Activated CD4-positive, alpha-beta memory T cell treated with anti-CD3 and anti-CD28 coated beads for 36 hours (primary cell): ENCODE measurements at regions of chr12 and their contacts with region 1.

Region 1: GRCh38 chr12:59626377-59626776 is 30.5 kb downstream of the SLC16A7 start:
- DNase-seq: peak; percentile 21
- H3K4me3 Mint-ChIP-seq: no peak overlapping the region
- H3K27ac Mint-ChIP-seq: no peak overlapping the region
- H3K4me1 Mint-ChIP-seq: peaks cover 55% of the 10 kb centered on the region
- H3K27me3 Mint-ChIP-seq: no peaks in the 10 kb centered on the region

Region 2: DNA sequence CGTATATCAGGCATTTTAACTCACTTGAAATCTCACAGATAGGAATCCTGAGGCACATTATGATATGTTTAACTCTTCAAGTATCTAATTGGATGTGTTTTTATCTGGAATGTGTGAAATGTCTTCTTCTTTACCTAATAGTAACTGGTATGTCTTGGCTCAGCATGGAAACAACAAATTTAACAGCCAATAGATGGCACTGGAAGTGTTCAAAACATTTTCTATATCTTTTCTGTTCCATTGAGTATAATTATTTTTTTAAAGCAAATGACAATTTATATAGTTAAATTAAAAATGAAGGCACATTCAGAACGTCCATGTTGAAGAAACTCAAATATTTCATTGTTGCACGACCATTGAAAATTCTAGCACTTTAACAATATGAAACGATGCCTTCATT is 195.1 kb before region 1 on chr12:
- CTCF ChIA-PET with region 1: no interaction called
- POLR2A ChIA-PET with region 1: no interaction called
- intact Hi-C with region 1: no loop called
- DNase-seq: no peak
- H3K4me3 Mint-ChIP-seq: no peak overlapping the region
- H3K27ac Mint-ChIP-seq: no peak overlapping the region
- H3K4me1 Mint-ChIP-seq: no peaks in the 10 kb centered on the region
- H3K27me3 Mint-ChIP-seq: no peaks in the 10 kb centered on the region

Region 3: DNA sequence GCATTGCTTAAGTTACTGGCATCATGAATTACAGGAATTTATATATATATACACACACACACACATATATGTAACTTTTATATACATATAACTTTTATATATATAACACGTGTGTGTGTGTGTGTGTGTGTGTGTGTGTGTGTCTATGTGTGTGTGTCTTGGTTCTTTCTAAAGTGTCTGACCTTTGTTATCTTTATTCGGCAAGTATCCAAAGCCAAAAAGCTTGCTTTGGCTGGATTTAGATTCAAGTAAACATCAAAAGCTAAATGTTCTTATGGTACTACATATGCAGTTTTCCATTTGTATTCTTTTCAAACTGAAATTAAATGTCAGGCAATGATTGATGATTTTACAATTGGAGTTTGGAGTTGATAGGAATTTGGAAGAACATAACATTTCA is 39.3 kb after region 1 on chr12:
- CTCF ChIA-PET with region 1: no interaction called
- POLR2A ChIA-PET with region 1: no interaction called
- intact Hi-C with region 1: loop called (anchors 5 kb)
- DNase-seq: no peak
- H3K4me3 Mint-ChIP-seq: no peak overlapping the region
- H3K27ac Mint-ChIP-seq: no peak overlapping the region
- H3K4me1 Mint-ChIP-seq: peaks cover 30% of the 10 kb centered on the region
- H3K27me3 Mint-ChIP-seq: no peaks in the 10 kb centered on the region

Region 4: DNA sequence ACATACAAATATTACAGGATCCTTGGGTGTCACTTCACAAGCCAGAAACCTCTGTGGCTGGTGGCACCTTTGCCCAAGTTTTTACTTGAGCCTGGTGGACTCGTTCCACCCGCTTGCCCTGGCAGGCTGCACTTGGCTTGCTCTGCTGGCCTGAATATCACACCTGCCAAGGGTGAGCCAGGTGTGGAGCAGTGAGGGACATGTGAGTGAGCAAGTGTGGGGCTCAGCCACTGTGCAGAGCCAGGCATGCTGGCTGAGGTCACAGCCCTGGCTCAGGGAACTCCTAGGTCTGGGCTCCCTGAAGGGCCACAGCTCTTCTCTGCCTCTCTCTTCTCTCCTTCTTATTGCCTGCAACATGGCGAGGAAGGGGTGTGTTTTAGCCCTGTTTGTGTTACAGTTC is 51.5 kb after region 1 on chr12:
- CTCF ChIA-PET with region 1: no interaction called
- POLR2A ChIA-PET with region 1: no interaction called
- intact Hi-C with region 1: loop called (anchors 2 kb)
- DNase-seq: no peak
- H3K4me3 Mint-ChIP-seq: no peak overlapping the region
- H3K27ac Mint-ChIP-seq: no peak overlapping the region
- H3K4me1 Mint-ChIP-seq: peaks cover 18% of the 10 kb centered on the region
- H3K27me3 Mint-ChIP-seq: no peaks in the 10 kb centered on the region

Region 5: GRCh38 chr12:60072911-60073310 is 446.5 kb after region 1 on chr12:
- CTCF ChIA-PET with region 1: no interaction called
- POLR2A ChIA-PET with region 1: no interaction called
- intact Hi-C with region 1: no loop called
- DNase-seq: no peak
- H3K4me3 Mint-ChIP-seq: no peak overlapping the region
- H3K27ac Mint-ChIP-seq: no peak overlapping the region
- H3K4me1 Mint-ChIP-seq: no peaks in the 10 kb centered on the region
- H3K27me3 Mint-ChIP-seq: no peaks in the 10 kb centered on the region